Left colon (tissue), 2 donors: ENCODE measurements at regions of chr9 and their contacts with region 1.

Region 1: GRCh38 chr9:101530077-101530711 is 3.5 kb upstream of the RNF20 start:
- DNase-seq: peak; percentile 32 to 60
- ATAC-seq: peak; percentile 40

Region 2: GRCh38 chr9:101398068-101398929 is 131.9 kb before region 1 on chr9 and contains the starts of genes MRPL50 and ZNF189:
- intact Hi-C with region 1: loop called in 1 of 2 experiments (anchors 10 kb)
- DNase-seq: peak; percentile 97 to 99
- ATAC-seq: peak; percentile 96
- total RNA-seq, gene MRPL50: 8.1 to 8.8 TPM
- total RNA-seq, gene ZNF189: 14.1 to 17.5 TPM

Region 3: DNA sequence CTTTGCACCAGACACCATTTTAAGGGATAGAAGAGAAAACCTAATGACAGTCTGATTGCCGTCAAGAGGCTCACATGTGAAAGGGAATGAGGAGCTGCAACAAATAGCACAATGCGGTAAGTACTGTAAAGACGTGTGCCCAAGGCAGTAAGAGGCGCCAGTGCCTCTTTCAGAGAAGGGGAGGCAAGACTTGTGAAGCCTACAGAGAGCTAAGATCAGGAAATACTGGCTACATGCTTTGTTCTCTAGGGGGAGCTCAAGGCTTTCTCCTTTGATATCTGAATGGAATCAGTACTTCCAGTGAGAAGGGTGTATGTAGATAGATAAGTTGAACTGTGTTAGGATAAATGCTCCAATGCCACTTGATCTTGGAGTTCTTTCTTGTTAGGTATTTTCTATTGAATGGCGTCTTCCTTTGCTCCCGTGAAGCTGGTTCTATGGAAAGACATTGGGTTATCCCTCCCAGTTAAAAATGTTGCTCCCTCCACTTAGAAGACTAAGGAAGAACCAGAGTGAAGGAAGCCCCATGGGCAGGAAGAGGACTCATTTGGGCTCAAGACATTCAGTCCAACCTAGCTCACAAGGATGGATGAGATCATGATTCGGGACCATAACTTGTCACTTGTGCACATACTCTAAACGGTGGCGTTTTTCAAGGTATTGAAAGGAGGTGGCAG is 71.1 kb before region 1 on chr9:
- intact Hi-C with region 1: loop called in 1 of 2 experiments (anchors 2 kb)
- DNase-seq: peak in 1 of 2 donors; percentile 11
- ATAC-seq: peak; percentile 98

Region 4: GRCh38 chr9:101881508-101881907 is 351.3 kb after region 1 on chr9:
- intact Hi-C with region 1: no loop called
- DNase-seq: no peak
- ATAC-seq: no peak